Sigmoid colon (tissue), 7 donors: ENCODE measurements at regions of chr1 and their contacts with region 1.

Region 1: GRCh38 chr1:222792744-222793143 is 22.1 kb upstream of the DISP1 start:
- DNase-seq: no peak
- H3K4me3 ChIP-seq: no peak overlapping the region
- H3K27ac ChIP-seq: no peak overlapping the region
- H3K4me1 ChIP-seq: peaks cover 0 to 42% (median 15%) of the 10 kb centered on the region in 4 donors
- H3K27me3 ChIP-seq: no peaks in the 10 kb centered on the region
- CTCF ChIP-seq: peak; percentile 34 to 56 (median 48)
- EP300 ChIP-seq: no peak
- POLR2A ChIP-seq: no peak

Region 2: GRCh38 chr1:221897321-221897721 is 895.4 kb before region 1 on chr1:
- intact Hi-C with region 1: no loop called
- DNase-seq: no peak
- H3K4me3 ChIP-seq: no peak overlapping the region
- H3K27ac ChIP-seq: no peak overlapping the region
- H3K4me1 ChIP-seq: no peaks in the 10 kb centered on the region
- H3K27me3 ChIP-seq: no peaks in the 10 kb centered on the region
- CTCF ChIP-seq: no peak
- EP300 ChIP-seq: no peak
- POLR2A ChIP-seq: no peak

Region 3: GRCh38 chr1:222736972-222737371 is 55.8 kb before region 1 on chr1 and contains the start of gene FAM177B:
- intact Hi-C with region 1: loop called (anchors 5 kb)
- DNase-seq: no peak
- H3K4me3 ChIP-seq: no peak within 1 kb of the TSS
- H3K27ac ChIP-seq: no peak within 1 kb of the TSS
- H3K4me1 ChIP-seq: peaks cover 0 to 9% (median 3%) of the 10 kb centered on the region in 4 donors
- H3K27me3 ChIP-seq: no peaks in the 10 kb centered on the region
- CTCF ChIP-seq: no peak
- EP300 ChIP-seq: no peak
- POLR2A ChIP-seq: no peak
- total RNA-seq, gene FAM177B: 0.36 to 4.7 (median 0.54) TPM in 3 of 4 donors, not detected in the other

Region 4: GRCh38 chr1:223123011-223123610 is 330.4 kb after region 1 on chr1:
- intact Hi-C with region 1: loop called (anchors 2 kb)
- DNase-seq: no peak
- H3K4me3 ChIP-seq: no peak overlapping the region
- H3K27ac ChIP-seq: peak overlapping the region in 1 of 4 donors; percentile 30
- H3K4me1 ChIP-seq: peaks cover 0 to 7% (median 5%) of the 10 kb centered on the region in 4 donors
- H3K27me3 ChIP-seq: no peaks in the 10 kb centered on the region
- CTCF ChIP-seq: no peak
- EP300 ChIP-seq: no peak
- POLR2A ChIP-seq: no peak

Region 5: DNA sequence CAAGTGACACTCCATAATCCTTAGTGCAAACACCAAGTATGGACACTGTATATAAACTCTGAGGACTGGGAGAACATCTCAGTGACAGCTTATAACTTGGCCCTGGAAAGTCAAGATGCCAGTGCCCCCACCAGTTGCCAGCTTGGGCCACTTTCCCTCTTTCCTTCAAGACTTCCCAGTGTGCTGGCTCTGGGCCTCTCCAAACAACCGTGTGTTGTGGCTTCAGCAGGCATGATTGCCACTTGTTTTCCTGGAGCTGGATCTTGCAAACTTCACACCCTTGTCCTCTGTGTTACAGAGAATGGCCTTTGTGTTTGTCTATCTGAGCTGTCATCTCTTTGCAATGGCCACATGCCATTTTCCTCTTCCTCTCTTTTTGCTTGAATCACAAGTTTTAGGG is 637.5 kb after region 1 on chr1:
- intact Hi-C with region 1: no loop called
- DNase-seq: no peak
- H3K4me3 ChIP-seq: no peak overlapping the region
- H3K27ac ChIP-seq: peak overlapping the region in 3 of 4 donors; percentile 62 to 75 (median 63)
- H3K4me1 ChIP-seq: peaks cover 0 to 41% (median 29%) of the 10 kb centered on the region in 4 donors
- H3K27me3 ChIP-seq: no peaks in the 10 kb centered on the region
- CTCF ChIP-seq: no peak
- EP300 ChIP-seq: no peak
- POLR2A ChIP-seq: no peak

Region 6: GRCh38 chr1:223683586-223684487 is 891.1 kb after region 1 on chr1:
- intact Hi-C with region 1: loop called (anchors 10 kb)
- DNase-seq: no peak
- H3K4me3 ChIP-seq: no peak overlapping the region
- H3K27ac ChIP-seq: no peak overlapping the region
- H3K4me1 ChIP-seq: no peaks in the 10 kb centered on the region
- H3K27me3 ChIP-seq: peaks cover 0 to 3% (median 0%) of the 10 kb centered on the region in 3 donors
- CTCF ChIP-seq: peak; percentile 16 to 68 (median 52)
- EP300 ChIP-seq: no peak
- POLR2A ChIP-seq: no peak